ENCODE measurements at regions of chr6 and their contacts with region 1.

Region 1: GRCh38 chr6:103396768-103397167 is 1463.0 kb downstream of the HACE1 start:
- DNase-seq: no peak

Region 2: GRCh38 chr6:102631921-102632320 is 764.8 kb before region 1 on chr6:
- CTCF ChIA-PET with region 1: no interaction called
- POLR2A ChIA-PET with region 1: no interaction called
- DNase-seq: no peak

Region 3: GRCh38 chr6:103124471-103124870 is 272.3 kb before region 1 on chr6:
- CTCF ChIA-PET with region 1: interaction called, 13 read pairs
- POLR2A ChIA-PET with region 1: no interaction called
- DNase-seq: no peak

Region 4: GRCh38 chr6:103409475-103409874 is 12.7 kb after region 1 on chr6:
- CTCF ChIA-PET with region 1: no interaction called
- POLR2A ChIA-PET with region 1: no interaction called
- DNase-seq: no peak